Caco-2 (cell line): ENCODE measurements at regions of chr21 and their contacts with region 1.

Region 1: DNA sequence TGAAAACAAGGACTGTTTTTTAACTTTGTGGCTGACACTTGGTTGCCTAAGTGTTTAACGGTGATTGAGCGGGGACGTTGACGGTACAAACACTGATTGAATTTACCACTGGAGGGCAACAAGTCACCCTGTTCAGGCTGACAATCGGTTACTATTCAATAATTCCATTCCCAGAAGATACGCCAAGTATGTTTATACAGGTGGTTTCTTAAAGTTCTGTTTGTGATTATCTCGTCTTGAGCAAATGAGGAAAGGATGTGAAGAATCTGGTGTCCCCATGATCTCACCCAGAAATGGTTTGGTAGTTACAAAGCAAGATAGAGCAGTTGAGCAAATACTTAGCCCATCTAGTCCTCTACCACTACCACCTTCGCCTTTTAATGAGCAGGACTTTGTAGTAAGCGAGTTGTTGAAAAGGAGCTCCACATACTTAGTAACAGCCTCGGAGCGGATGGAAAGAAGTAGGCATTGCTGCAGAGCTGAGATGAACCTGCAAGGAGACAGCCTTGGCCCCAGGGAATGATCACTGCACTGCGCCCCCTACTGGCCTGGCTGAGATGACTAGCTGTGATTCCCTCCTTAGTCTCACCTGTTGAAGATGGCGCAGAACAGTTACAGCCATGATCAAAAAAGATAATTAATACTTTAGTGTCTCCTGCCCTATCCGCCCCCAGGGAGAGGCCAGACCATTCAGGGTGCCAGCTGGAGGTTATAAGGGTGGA is 36.3 kb downstream of the IFNAR1 start:
- DNase-seq: peak; percentile 84 to 88
- H3K4me3 ChIP-seq: peak overlapping the region; percentile 31
- H3K4me3 Mint-ChIP-seq: peak overlapping the region; percentile 68
- H3K27ac Mint-ChIP-seq: peak overlapping the region; percentile 79
- H3K4me1 ChIP-seq: peaks cover 18% of the 10 kb centered on the region
- H3K4me1 Mint-ChIP-seq: peaks cover 14% of the 10 kb centered on the region
- H3K27me3 ChIP-seq: no peaks in the 10 kb centered on the region
- H3K27me3 Mint-ChIP-seq: no peaks in the 10 kb centered on the region
- CTCF ChIP-seq: peak; percentile 84 to 87

Region 2: GRCh38 chr21:33199516-33200217 is 161.4 kb before region 1 on chr21:
- CTCF ChIA-PET with region 1: interaction called, 41 read pairs
- POLR2A ChIA-PET with region 1: no interaction called
- intact Hi-C with region 1: loop called (anchors 1 kb)
- DNase-seq: peak; percentile 81
- H3K4me3 ChIP-seq: no peak overlapping the region
- H3K4me3 Mint-ChIP-seq: no peak overlapping the region
- H3K27ac Mint-ChIP-seq: no peak overlapping the region
- H3K4me1 ChIP-seq: peaks cover 23% of the 10 kb centered on the region
- H3K4me1 Mint-ChIP-seq: peaks cover 22% of the 10 kb centered on the region
- H3K27me3 ChIP-seq: no peaks in the 10 kb centered on the region
- H3K27me3 Mint-ChIP-seq: no peaks in the 10 kb centered on the region
- CTCF ChIP-seq: peak; percentile 65 to 82

Region 3: DNA sequence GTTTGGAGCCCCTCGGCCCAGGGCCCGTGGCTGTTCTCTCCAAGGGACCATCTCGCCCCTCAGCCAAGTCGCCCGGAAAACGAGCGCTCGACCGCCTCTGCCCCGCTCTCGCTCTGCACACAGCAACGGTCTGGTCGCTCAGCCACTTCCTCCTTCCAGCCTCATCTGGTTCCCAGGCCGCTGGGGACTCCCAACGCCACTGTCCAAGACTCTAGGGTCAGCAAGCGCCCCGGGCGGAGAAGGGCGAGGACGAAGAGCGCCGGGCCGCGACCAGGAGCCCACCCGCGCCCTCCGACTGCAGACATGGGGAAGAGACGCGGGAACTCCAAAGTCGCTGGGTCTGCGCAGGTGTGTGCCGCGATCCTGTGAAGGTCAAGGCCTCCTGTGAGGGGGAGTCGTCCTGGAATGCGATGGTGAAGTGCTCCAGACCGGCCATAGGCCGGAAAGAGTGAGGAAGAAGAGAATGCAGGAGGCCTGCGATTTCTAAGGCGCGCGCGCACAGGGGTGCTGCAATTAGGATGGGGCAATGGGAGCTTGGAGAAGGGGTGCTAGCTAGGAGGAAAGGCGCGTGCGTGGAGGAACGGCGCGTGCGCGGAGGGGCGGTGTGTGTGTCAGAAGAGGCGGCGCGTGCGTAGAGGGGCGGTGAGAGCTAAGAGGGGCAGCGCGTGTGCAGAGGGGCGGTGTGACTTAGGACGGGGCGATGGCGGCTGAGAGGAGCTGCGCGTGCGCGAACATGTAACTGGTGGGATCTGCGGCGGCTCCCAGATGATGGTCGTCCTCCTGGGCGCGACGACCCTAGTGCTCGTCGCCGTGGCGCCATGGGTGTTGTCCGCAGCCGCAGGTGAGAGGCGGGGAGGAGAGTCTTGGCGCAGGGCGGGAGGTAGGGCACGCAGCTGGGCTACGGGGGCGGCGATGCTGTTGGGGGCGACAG is 36.5 kb before region 1 on chr21 and contains the start of gene IFNAR1:
- CTCF ChIA-PET with region 1: interaction called, 15 read pairs
- POLR2A ChIA-PET with region 1: interaction called, 9 read pairs
- intact Hi-C with region 1: loop called (anchors 1 kb)
- DNase-seq: peak; percentile 94 to 96
- H3K4me3 ChIP-seq: peak within 1 kb of the TSS; percentile 70
- H3K4me3 Mint-ChIP-seq: no peak within 1 kb of the TSS
- H3K27ac Mint-ChIP-seq: no peak within 1 kb of the TSS
- H3K4me1 ChIP-seq: no peaks in the 10 kb centered on the region
- H3K4me1 Mint-ChIP-seq: no peaks in the 10 kb centered on the region
- H3K27me3 ChIP-seq: no peaks in the 10 kb centered on the region
- H3K27me3 Mint-ChIP-seq: peaks cover 2% of the 10 kb centered on the region
- CTCF ChIP-seq: no peak
- total RNA-seq, gene IFNAR1: 19.7 and 20.4 TPM in 2 replicates

Region 4: DNA sequence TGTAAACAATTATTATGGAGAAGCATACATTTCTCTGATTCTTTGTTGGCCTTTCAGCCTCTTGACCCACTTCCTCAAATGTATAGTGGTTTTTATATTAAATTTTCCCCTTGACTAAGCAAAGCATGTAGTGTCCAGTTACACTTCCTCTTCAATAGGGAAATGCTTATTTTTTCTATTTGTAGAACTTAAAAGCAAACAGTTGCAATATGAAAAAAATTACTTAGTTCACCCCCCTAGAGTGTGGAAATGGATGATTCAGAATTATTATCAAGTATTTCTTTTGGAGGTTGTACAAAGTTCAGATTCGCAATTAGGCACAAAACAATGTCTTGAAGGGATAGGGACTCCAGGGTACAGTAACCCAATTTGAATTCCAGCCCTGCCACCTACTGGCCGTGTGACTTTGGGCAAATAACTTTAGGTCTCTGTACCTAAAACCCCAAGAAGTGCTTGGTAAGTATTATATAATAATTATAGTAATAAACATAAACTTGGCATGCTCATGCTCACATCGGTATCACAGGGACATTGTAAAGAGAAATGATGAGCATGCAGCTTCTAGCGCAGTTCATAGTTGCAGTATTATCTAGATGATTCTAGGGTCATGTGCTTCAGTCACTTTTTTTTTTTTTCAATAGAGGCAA is 13.5 kb after region 1 on chr21:
- CTCF ChIA-PET with region 1: interaction called, 9 read pairs
- POLR2A ChIA-PET with region 1: no interaction called
- intact Hi-C with region 1: loop called (anchors 2 kb)
- DNase-seq: peak; percentile 43 to 46
- H3K4me3 ChIP-seq: no peak overlapping the region
- H3K4me3 Mint-ChIP-seq: no peak overlapping the region
- H3K27ac Mint-ChIP-seq: no peak overlapping the region
- H3K4me1 ChIP-seq: peaks cover 6% of the 10 kb centered on the region; the same call in 1 of the 2 replicates
- H3K4me1 Mint-ChIP-seq: no peaks in the 10 kb centered on the region
- H3K27me3 ChIP-seq: no peaks in the 10 kb centered on the region
- H3K27me3 Mint-ChIP-seq: no peaks in the 10 kb centered on the region
- CTCF ChIP-seq: peak; percentile 65 to 69

Region 5: DNA sequence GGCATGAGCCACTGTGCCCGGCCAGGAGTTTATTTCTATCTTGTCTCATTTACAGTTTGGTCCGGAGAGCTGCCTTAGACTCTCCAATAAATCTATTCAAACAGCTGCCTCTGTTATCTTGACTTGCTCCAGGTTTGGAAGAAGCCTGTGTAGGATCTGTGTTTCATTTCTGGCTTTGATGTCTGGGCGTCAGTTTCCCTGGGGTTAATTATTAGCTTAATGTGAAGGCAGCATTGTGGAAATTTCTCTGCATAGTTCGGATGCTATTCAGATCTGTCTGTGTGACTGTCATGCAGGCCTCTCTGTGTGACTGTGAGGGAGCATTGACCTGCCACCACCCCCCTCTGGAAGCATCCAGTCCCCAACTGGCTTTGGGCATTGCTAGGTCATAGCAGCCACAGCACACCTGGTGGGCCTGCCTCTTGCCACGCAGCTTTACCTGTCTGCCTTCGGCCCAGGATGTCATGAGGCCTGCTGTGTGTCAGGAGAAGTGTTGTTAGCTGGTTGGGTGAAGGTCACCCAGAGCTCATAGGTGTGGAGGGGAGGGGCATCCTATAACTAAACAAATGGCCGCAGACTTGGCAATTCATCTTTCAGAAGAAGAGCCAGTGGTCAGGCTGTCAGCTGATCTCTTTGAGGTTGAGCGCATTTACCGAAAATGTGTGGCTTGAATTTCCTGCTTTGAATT is 51.9 kb after region 1 on chr21:
- CTCF ChIA-PET with region 1: interaction called, 32 read pairs
- POLR2A ChIA-PET with region 1: interaction called, 3 read pairs
- intact Hi-C with region 1: no loop called
- DNase-seq: peak; percentile 88 to 93
- H3K4me3 ChIP-seq: no peak overlapping the region
- H3K4me3 Mint-ChIP-seq: peak overlapping the region; percentile 64
- H3K27ac Mint-ChIP-seq: peak overlapping the region; percentile 93
- H3K4me1 ChIP-seq: peaks cover 52% of the 10 kb centered on the region
- H3K4me1 Mint-ChIP-seq: peaks cover 38% of the 10 kb centered on the region
- H3K27me3 ChIP-seq: no peaks in the 10 kb centered on the region
- H3K27me3 Mint-ChIP-seq: no peaks in the 10 kb centered on the region
- CTCF ChIP-seq: no peak

Region 6: GRCh38 chr21:33479679-33480480 is 118.8 kb after region 1 on chr21 and contains the start of gene TMEM50B:
- CTCF ChIA-PET with region 1: interaction called, 15 read pairs
- POLR2A ChIA-PET with region 1: interaction called, 4 read pairs
- intact Hi-C with region 1: no loop called
- DNase-seq: peak; percentile 97
- H3K4me3 ChIP-seq: peak within 1 kb of the TSS; percentile 91
- H3K4me3 Mint-ChIP-seq: peak within 1 kb of the TSS; percentile 91
- H3K27ac Mint-ChIP-seq: peak within 1 kb of the TSS; percentile 89
- H3K4me1 ChIP-seq: peaks cover 6% of the 10 kb centered on the region; the same call in 1 of the 2 replicates
- H3K4me1 Mint-ChIP-seq: peaks cover 4% of the 10 kb centered on the region
- H3K27me3 ChIP-seq: no peaks in the 10 kb centered on the region
- H3K27me3 Mint-ChIP-seq: no peaks in the 10 kb centered on the region
- CTCF ChIP-seq: peak; percentile 35 to 82
- total RNA-seq, gene TMEM50B: 21.0 and 25.9 TPM in 2 replicates